BJ (cell line): ENCODE measurements at regions of chr11 and their contacts with region 1.

Region 1: DNA sequence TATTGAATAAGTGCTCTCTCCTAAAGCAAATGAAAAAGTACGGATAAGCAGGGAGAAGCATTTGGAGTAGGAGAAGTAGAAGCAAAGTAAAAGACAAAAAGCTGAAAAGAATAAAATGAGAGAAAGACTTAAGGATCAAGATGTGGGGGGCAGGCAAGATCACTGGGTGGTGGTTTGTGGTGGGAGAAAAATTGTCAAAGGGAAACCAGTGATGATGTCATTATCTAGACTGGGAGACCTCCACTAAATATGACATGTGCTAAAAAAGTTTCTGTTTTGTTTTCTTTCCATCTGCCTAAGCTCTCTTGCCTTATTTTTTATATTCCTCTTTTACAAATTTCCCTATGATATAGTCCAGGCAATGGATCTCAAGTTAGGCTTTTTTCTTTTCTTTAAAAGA is 14.8 kb upstream of the MAML2 start:
- DNase-seq: no peak
- H3K4me3 ChIP-seq: no peak overlapping the region
- H3K27me3 ChIP-seq: no peaks in the 10 kb centered on the region
- CTCF ChIP-seq: no peak

Region 2: DNA sequence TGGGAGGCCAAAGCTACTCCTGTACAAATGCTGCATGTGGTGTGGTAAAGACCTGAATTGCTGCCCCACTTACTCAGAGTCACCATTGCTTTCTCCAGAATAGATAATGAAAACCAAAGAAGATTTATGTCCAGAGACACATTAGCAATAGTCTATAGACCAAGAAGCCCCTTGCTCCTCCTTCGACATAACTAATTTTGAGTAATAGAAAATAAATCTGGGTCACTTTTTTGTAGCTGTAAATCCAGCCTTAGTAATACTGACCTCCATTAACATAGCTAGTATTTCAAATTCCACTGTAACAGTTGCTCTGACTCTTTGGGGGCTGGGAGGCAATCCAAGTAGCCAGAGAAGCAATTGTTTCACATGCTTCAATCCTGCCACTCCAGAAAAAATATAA is 160.7 kb before region 1 on chr11:
- CTCF ChIA-PET with region 1: no interaction called
- POLR2A ChIA-PET with region 1: interaction called, 14 read pairs
- DNase-seq: no peak
- H3K4me3 ChIP-seq: no peak overlapping the region
- H3K27me3 ChIP-seq: no peaks in the 10 kb centered on the region
- CTCF ChIP-seq: no peak